Heart right ventricle (tissue), 16 donors: ENCODE measurements at regions of chr15 and their contacts with region 1.

Region 1: GRCh38 chr15:43483306-43484128 is 9.4 kb downstream of the TP53BP1 start:
- DNase-seq: no peak
- ATAC-seq: no peak
- H3K4me3 ChIP-seq: no peak overlapping the region
- H3K27ac ChIP-seq: peak overlapping the region in 2 of 10 donors; percentile 3 to 8
- H3K4me1 ChIP-seq: peaks cover 0 to 15% (median 4%) of the 10 kb centered on the region in 9 donors
- H3K27me3 ChIP-seq: no peaks in the 10 kb centered on the region
- CTCF ChIP-seq: peak in 7 of 9 donors; percentile 21 to 60 (median 46)

Region 2: GRCh38 chr15:43383070-43383469 is 100.4 kb before region 1 on chr15:
- intact Hi-C with region 1: no loop called
- DNase-seq: no peak
- ATAC-seq: no peak
- H3K4me3 ChIP-seq: no peak overlapping the region
- H3K27ac ChIP-seq: no peak overlapping the region
- H3K4me1 ChIP-seq: no peaks in the 10 kb centered on the region
- H3K27me3 ChIP-seq: no peaks in the 10 kb centered on the region
- CTCF ChIP-seq: no peak

Region 3: DNA sequence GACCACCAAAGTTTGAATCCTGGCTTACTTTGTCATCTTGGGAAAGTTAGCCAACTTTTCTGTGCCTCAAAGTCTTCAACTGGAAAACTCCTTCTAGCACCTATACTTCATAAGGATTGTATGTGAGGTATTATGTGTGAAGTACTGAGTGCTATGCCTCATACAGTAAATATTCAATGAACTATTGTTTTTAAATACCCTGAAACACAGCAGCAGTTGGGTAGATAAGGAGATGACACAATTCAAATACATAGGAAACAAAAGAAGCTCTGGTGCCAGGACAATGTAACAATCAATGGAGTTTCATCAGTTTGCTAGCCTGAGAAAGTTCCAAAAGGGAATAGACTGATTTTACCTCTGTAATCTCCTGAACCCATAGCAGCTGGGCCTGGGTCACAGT is 69.3 kb before region 1 on chr15:
- intact Hi-C with region 1: no loop called
- DNase-seq: no peak
- ATAC-seq: no peak
- H3K4me3 ChIP-seq: no peak overlapping the region
- H3K27ac ChIP-seq: no peak overlapping the region
- H3K4me1 ChIP-seq: no peaks in the 10 kb centered on the region
- H3K27me3 ChIP-seq: no peaks in the 10 kb centered on the region
- CTCF ChIP-seq: no peak

Region 4: DNA sequence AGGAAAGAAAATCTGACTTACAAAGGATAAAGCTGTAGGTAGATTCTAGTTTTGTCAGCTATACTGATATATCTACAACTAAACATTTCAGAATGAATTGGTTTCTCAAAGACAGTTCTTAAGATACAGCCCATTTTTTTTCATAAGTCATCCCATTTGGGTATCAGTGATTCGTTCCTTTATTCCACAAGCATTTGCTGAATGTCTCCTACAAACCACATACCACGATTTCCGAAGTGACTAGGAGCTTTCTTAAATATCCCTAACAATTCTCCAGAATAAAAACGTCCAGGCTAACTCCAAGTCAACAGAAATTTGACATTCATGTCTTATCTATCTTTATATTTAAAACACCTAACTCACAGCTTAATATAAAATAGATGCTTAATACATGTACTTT is 50.4 kb before region 1 on chr15:
- intact Hi-C with region 1: no loop called
- DNase-seq: no peak
- ATAC-seq: no peak
- H3K4me3 ChIP-seq: no peak overlapping the region
- H3K27ac ChIP-seq: no peak overlapping the region
- H3K4me1 ChIP-seq: no peaks in the 10 kb centered on the region
- H3K27me3 ChIP-seq: no peaks in the 10 kb centered on the region
- CTCF ChIP-seq: no peak

Region 5: DNA sequence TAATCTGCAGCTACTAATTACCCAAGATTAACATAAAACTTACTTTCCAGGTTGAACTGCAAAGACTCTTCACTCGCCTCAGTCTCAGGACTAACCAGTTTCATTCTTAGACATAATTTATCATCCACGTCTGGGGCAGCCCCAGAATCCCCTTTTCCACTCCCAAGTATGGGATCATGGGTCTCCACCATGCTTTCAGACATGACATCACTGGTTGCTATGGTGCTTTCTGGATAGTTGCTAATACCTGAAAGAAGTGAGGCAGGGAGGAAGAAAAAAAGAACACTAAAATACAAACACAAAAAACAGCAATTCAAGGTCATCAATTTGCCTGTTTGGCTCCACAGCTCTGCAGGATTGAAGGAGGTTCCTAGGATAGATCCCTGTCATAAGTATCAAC is 37.2 kb before region 1 on chr15:
- intact Hi-C with region 1: no loop called
- DNase-seq: no peak
- ATAC-seq: no peak
- H3K4me3 ChIP-seq: no peak overlapping the region
- H3K27ac ChIP-seq: no peak overlapping the region
- H3K4me1 ChIP-seq: peaks cover 0 to 5% (median 3%) of the 10 kb centered on the region in 9 donors
- H3K27me3 ChIP-seq: no peaks in the 10 kb centered on the region
- CTCF ChIP-seq: no peak

Region 6: GRCh38 chr15:43541785-43542184 is 58.3 kb after region 1 on chr15:
- intact Hi-C with region 1: loop called in 1 of 10 experiments (anchors 5 kb)
- DNase-seq: no peak
- ATAC-seq: no peak
- H3K4me3 ChIP-seq: no peak overlapping the region
- H3K27ac ChIP-seq: no peak overlapping the region
- H3K4me1 ChIP-seq: no peaks in the 10 kb centered on the region
- H3K27me3 ChIP-seq: no peaks in the 10 kb centered on the region
- CTCF ChIP-seq: no peak